Heart left ventricle (tissue), 16 donors: ENCODE measurements at regions of chr5 and their contacts with region 1.

Region 1: GRCh38 chr5:140312067-140312790 is 9.3 kb upstream of the PFDN1 start:
- DNase-seq: peak in 3 of 5 donors; percentile 50 to 64 (median 54)
- ATAC-seq: peak; percentile 43 to 91 (median 76)
- H3K4me3 ChIP-seq: peak overlapping the region in 3 of 12 donors; percentile 11 to 22 (median 14)
- H3K27ac ChIP-seq: peak overlapping the region; percentile 48 to 87 (median 72)
- H3K4me1 ChIP-seq: peaks cover 0 to 37% (median 23%) of the 10 kb centered on the region in 12 donors
- H3K27me3 ChIP-seq: no peaks in the 10 kb centered on the region
- CTCF ChIP-seq: no peak
- POLR2A ChIP-seq: peak in 1 of 2 donors; percentile 11

Region 2: GRCh38 chr5:140329739-140330481 is 17.7 kb after region 1 on chr5:
- intact Hi-C with region 1: loop called in 1 of 10 experiments (anchors 2 kb)
- DNase-seq: peak in 2 of 5 donors; percentile 37 to 41
- ATAC-seq: peak; percentile 44 to 80 (median 58)
- H3K4me3 ChIP-seq: no peak overlapping the region
- H3K27ac ChIP-seq: peak overlapping the region in 11 of 12 donors; percentile 16 to 68 (median 39)
- H3K4me1 ChIP-seq: peaks cover 0 to 41% (median 18%) of the 10 kb centered on the region in 12 donors
- H3K27me3 ChIP-seq: no peaks in the 10 kb centered on the region
- CTCF ChIP-seq: no peak
- POLR2A ChIP-seq: no peak